GM12878 (cell line): ENCODE measurements at regions of chr5 and their contacts with region 1.

Region 1: GRCh38 chr5:42461507-42461906 is 38.3 kb downstream of the GHR start:
- DNase-seq: no peak
- ATAC-seq: no peak
- H3K4me3 ChIP-seq: no peak overlapping the region
- H3K27ac ChIP-seq: no peak overlapping the region
- H3K4me1 ChIP-seq: no peaks in the 10 kb centered on the region
- H3K27me3 ChIP-seq: no peaks in the 10 kb centered on the region
- CTCF ChIP-seq: no peak
- EP300 ChIP-seq: no peak
- POLR2A ChIP-seq: no peak
- RAD21 ChIP-seq: no peak

Region 2: DNA sequence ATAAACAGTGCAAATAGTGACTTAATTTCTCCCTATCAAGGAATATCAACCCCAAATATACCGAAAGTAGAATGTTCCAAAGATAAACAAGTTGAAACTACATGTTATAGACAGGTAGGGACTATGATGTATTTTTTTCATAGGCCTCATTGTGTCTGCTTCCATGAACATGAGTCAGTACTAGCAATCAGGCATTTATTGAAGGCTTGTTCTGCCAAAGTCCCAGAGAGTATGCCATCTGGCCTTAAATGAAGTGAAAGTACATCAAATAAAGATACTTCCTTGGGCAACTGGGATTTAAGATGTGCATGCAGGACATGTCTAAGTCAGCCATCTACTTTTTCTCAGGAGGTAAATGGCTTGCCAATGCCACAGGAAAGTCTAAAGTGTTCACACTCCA is 31.8 kb before region 1 on chr5:
- CTCF ChIA-PET with region 1: interaction called, 22 read pairs
- POLR2A ChIA-PET with region 1: interaction called, 18 read pairs
- RAD21 ChIA-PET with region 1: interaction called, 79 read pairs
- SMC1A ChIA-PET with region 1: interaction called, 35 read pairs
- in situ Hi-C with region 1: no loop called
- intact Hi-C with region 1: no loop called
- DNase-seq: no peak
- ATAC-seq: no peak
- H3K4me3 ChIP-seq: no peak overlapping the region
- H3K27ac ChIP-seq: no peak overlapping the region
- H3K4me1 ChIP-seq: no peaks in the 10 kb centered on the region
- H3K27me3 ChIP-seq: no peaks in the 10 kb centered on the region
- CTCF ChIP-seq: no peak
- EP300 ChIP-seq: no peak
- POLR2A ChIP-seq: no peak
- RAD21 ChIP-seq: no peak